Endothelial cell of umbilical vein (primary cell): ENCODE measurements at regions of chr16 and their contacts with region 1.

Region 1: GRCh38 chr16:56356276-56357240 is 68.8 kb downstream of the AMFR start:
- DNase-seq: peak; percentile 88
- H3K4me3 ChIP-seq: peak overlapping the region; percentile 22 to 60 (median 56)
- H3K27ac ChIP-seq: peak overlapping the region; percentile 87
- H3K4me1 ChIP-seq: peaks cover 14% of the 10 kb centered on the region
- H3K27me3 ChIP-seq: peaks cover 0 to 3% of the 10 kb centered on the region in 2 experiments
- CTCF ChIP-seq: peak; percentile 92 to 93
- POLR2A ChIP-seq: no peak

Region 2: DNA sequence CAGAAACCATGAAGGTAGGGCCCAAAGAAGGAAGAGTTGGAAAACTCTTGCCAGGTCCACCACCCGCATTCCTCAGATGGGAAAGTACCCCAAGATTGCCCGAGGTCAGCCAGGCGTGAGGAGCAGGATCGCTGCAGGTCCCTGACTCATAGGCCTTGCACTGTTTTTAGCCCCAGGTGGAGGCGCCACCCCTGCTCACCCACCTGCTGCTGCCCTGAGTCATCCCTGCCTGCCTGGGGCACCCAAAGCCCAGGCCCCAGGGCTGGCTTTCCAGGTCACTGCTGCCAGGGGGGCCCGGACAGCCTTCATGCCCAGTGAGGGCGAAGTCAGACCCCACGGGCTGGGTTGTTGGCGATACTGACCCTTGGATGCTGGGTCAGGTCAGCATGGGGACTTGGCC is 32.2 kb before region 1 on chr16:
- CTCF ChIA-PET with region 1: interaction called, 21 read pairs
- POLR2A ChIA-PET with region 1: no interaction called
- dilution Hi-C with region 1: no loop called
- intact Hi-C with region 1: loop called (anchors 2 kb)
- DNase-seq: no peak
- H3K4me3 ChIP-seq: no peak overlapping the region
- H3K27ac ChIP-seq: no peak overlapping the region
- H3K4me1 ChIP-seq: no peaks in the 10 kb centered on the region
- H3K27me3 ChIP-seq: peaks cover 0 to 2% of the 10 kb centered on the region in 2 experiments
- CTCF ChIP-seq: no peak
- POLR2A ChIP-seq: no peak

Region 3: DNA sequence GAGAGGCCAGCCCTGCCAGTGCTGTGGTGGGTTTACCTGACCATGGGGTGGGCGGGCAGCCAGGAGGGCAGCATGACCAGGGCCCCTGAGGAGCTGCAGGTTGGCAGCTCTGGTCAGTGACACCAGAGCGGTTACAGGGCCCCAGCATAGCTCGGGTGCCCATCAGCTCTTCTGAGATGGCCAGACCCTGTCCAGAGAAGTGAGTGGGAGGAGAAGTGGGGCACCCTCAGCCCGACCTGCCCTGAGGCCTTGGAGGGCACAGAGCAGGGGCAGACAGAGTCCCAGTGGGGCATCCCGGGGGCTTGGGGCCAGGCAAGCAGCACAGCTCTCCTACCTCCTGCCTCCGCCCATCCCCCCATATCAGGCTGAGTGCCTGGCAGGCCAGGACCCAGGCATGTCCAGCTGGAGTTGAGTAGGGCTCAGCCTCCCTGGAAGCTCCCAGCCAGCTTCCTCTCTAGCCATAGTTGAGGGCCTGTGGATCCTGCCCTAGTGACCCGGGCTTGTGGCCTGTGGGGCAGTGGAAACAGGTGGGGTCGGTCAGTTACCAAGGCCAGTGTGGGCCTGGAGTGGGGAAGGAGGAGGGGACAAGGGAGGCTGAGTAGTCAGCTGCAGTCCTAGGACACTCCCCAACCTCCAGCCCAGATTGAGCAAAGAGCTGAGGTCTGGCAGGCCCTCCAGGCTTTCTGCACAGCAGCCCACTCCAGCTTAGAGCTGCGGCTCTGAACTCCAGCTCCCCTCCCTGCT is 14.7 kb before region 1 on chr16:
- CTCF ChIA-PET with region 1: interaction called, 16 read pairs
- POLR2A ChIA-PET with region 1: no interaction called
- dilution Hi-C with region 1: no loop called
- intact Hi-C with region 1: no loop called
- DNase-seq: no peak
- H3K4me3 ChIP-seq: no peak overlapping the region
- H3K27ac ChIP-seq: no peak overlapping the region
- H3K4me1 ChIP-seq: no peaks in the 10 kb centered on the region
- H3K27me3 ChIP-seq: no peaks in the 10 kb centered on the region
- CTCF ChIP-seq: no peak
- POLR2A ChIP-seq: no peak

Region 4: GRCh38 chr16:56425439-56425832 is 68.9 kb after region 1 on chr16 and contains the start of gene AMFR:
- CTCF ChIA-PET with region 1: interaction called, 5 read pairs
- POLR2A ChIA-PET with region 1: no interaction called
- dilution Hi-C with region 1: no loop called
- intact Hi-C with region 1: loop called (anchors 1 kb)
- DNase-seq: peak; percentile 67
- H3K4me3 ChIP-seq: peak within 1 kb of the TSS; percentile 54 to 87 (median 68)
- H3K27ac ChIP-seq: peak within 1 kb of the TSS; percentile 68
- H3K4me1 ChIP-seq: peaks cover 13% of the 10 kb centered on the region
- H3K27me3 ChIP-seq: no peaks in the 10 kb centered on the region
- CTCF ChIP-seq: peak; percentile 23 to 46
- POLR2A ChIP-seq: peak; percentile 32
- total RNA-seq, gene AMFR: 66.5 and 77.4 TPM in 2 replicates